Activated CD8-positive, alpha-beta T cell treated with anti-CD3 and anti-CD28 coated beads for 36 hours (primary cell): ENCODE measurements at regions of chr18 and their contacts with region 1.

Region 1: DNA sequence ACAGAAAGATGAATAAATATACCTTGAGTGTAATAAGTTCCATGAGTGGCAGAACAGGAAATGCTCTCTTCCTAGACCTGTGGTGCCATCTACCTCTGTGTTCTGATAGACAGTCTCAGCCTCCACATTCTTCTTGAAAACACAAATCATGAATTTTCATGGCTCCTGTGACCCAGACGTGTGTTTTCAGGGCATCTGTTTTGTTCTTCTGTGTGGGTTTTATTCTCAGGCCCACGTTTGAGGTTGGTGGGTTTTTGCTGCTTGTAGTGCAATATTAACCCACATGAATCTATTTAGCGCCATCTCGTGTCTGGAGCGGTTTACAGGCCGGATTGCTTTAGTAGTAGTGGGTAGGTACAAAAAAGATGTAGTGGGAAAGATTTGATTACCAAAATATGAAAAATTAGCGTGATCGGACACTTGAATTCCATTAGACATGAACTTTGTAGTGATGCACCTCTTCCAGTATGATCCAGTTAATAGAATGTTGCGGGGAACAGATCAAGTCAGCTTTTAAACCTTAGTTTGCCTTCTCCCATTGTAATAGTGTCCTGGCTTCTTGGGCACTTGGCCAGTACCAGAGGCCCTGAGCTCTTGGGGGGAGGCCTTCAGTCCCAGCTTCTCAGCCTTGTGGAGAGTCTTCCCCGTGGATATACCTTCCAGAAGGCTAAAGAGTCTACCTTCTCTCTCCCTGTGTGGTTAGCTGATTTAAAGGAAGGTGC is 256.5 kb downstream of the TPGS2 start:
- DNase-seq: peak; percentile 56
- ATAC-seq: peak; percentile 37
- H3K4me3 Mint-ChIP-seq: no peak overlapping the region
- H3K27ac Mint-ChIP-seq: no peak overlapping the region
- H3K4me1 Mint-ChIP-seq: no peaks in the 10 kb centered on the region
- H3K27me3 Mint-ChIP-seq: peaks cover 4% of the 10 kb centered on the region
- CTCF ChIP-seq: peak; percentile 58

Region 2: DNA sequence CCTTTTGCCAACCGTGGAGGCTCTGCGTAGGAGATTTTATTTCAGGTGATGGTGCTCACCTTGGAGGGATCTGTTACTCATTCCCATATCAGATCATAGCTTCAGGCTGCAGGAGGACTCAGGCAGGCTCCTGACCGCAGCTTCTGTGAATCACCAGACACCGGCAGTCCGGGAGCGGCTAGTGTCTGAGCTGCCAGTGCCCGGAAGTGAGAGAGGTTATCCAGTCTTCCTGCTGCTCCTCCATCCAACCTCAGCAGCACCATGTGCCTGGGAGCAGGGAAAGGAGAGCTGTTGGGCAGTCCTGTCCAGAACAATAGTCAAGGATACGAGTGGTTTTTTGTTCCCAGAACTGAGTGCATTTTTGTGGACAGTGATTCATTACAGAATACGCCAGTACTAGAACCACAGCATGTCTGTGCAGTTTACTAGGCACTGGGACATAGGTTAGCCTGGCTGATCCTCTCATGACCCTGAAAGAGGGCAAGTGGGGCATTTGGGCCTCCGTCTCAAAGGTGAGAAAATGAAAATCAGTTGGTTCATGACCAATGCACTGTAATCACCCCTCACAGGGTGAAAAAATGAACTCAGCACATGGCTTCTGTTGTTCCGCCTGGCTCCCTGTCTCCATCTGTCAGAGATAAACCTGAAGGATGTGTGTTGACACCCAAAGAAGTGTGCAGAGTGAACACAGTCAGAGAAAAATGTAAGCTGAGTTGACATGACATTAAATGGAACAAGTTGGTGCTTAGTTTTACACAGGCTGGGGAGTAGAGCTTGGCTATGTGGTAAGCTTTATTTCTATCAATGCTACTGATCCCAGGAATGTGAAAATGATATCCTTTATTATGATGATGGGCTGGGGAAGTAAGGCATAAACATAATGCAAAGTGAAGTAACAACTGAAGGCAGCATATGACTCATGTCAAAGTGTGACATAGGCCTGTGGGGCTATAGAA is 262.6 kb before region 1 on chr18:
- CTCF ChIA-PET with region 1: no interaction called
- POLR2A ChIA-PET with region 1: no interaction called
- intact Hi-C with region 1: loop called (anchors 10 kb)
- DNase-seq: no peak
- ATAC-seq: no peak
- H3K4me3 Mint-ChIP-seq: no peak overlapping the region
- H3K27ac Mint-ChIP-seq: no peak overlapping the region
- H3K4me1 Mint-ChIP-seq: no peaks in the 10 kb centered on the region
- H3K27me3 Mint-ChIP-seq: peaks cover 23% of the 10 kb centered on the region
- CTCF ChIP-seq: no peak